ENCODE measurements at regions of chr13 and their contacts with region 1.

Region 1: DNA sequence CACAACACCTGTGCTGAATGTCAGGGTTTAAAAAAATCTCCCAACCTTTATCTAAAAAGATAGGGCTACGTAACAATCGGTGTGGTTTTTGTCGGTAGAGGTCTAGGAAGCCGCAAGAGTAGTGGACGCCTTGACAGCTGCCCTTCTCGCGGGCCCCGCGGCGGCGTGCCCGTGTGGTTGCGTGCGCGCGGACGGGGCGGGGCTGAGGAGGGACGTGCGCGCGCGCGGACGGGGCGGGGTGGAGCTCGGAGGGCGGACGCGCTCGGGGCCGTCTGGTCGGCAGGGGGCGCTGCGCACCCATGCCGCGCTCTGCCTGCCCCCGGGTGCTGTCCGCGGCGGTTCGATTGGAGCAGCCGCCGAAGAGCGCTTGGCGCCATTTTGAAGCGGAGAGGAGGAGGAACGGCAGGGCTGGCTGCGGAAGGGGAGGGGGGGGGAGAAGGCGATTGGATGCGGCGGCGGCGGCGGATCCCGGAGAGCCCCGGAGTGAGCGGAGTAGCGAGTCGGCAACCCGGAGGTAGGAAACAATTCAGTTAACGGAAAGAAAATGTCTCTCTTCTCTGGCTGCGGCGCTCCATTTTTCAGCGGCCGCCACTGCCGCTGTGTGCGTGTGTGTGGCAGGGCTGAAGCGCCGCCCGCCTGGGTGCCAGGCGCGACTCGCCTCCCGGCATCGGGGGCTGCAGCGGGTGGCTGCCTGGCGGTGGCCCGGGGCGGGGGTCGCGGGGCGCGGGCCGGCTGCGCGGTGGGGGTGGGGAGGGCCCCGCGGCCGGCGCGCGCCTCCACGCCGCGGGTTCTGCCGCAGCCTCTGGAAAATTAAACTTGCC is at the start of gene PDS5B:
- DNase-seq: peak; percentile 95 to 99 (median 97)
- ATAC-seq: peak; percentile 97
- H3K4me3 ChIP-seq: peak within 1 kb of the TSS; percentile 89
- H3K4me3 Mint-ChIP-seq: peak within 1 kb of the TSS; percentile 90 to 99 (median 97)
- H3K27ac ChIP-seq: peak within 1 kb of the TSS; percentile 79
- H3K27ac Mint-ChIP-seq: peak within 1 kb of the TSS; percentile 95 to 98 (median 96)
- H3K4me1 ChIP-seq: peaks cover 13 to 15% of the 10 kb centered on the region in 2 donors
- H3K4me1 Mint-ChIP-seq: peaks cover 32 to 49% (median 43%) of the 10 kb centered on the region in 7 donors
- H3K27me3 ChIP-seq: no peaks in the 10 kb centered on the region
- H3K27me3 Mint-ChIP-seq: peaks cover 0 to 20% (median 0%) of the 10 kb centered on the region in 5 donors
- total RNA-seq, gene PDS5B: 43.3 to 68.0 (median 52.1) TPM

Region 2: GRCh38 chr13:32031025-32031814 is 555.1 kb before region 1 on chr13 and contains the start of gene FRY:
- CTCF ChIA-PET with region 1: no interaction called
- POLR2A ChIA-PET with region 1: no interaction called
- intact Hi-C with region 1: loop called in 1 of 2 experiments (anchors 5 kb)
- DNase-seq: peak; percentile 34 to 67 (median 58)
- ATAC-seq: peak; percentile 86
- H3K4me3 ChIP-seq: peak within 1 kb of the TSS; percentile 71
- H3K4me3 Mint-ChIP-seq: peak within 1 kb of the TSS; percentile 82 to 99 (median 90)
- H3K27ac ChIP-seq: peak within 1 kb of the TSS; percentile 72
- H3K27ac Mint-ChIP-seq: peak within 1 kb of the TSS; percentile 77 to 97 (median 83)
- H3K4me1 ChIP-seq: peaks cover 3 to 16% of the 10 kb centered on the region in 2 donors
- H3K4me1 Mint-ChIP-seq: peaks cover 7 to 65% (median 49%) of the 10 kb centered on the region in 7 donors
- H3K27me3 ChIP-seq: no peaks in the 10 kb centered on the region
- H3K27me3 Mint-ChIP-seq: peaks cover 7 to 49% (median 13%) of the 10 kb centered on the region in 5 donors
- total RNA-seq, gene FRY: 9.9 to 39.9 (median 24.0) TPM

Region 3: GRCh38 chr13:32538621-32539246 is 47.6 kb before region 1 on chr13 and contains the start of gene N4BP2L2:
- CTCF ChIA-PET with region 1: interaction called, 6 read pairs
- POLR2A ChIA-PET with region 1: interaction called, 8 read pairs
- intact Hi-C with region 1: loop called (anchors 1 kb)
- DNase-seq: peak; percentile 70 to 94 (median 91)
- ATAC-seq: peak; percentile 98
- H3K4me3 ChIP-seq: peak within 1 kb of the TSS; percentile 78
- H3K4me3 Mint-ChIP-seq: peak within 1 kb of the TSS; percentile 94 to 100 (median 100)
- H3K27ac ChIP-seq: peak within 1 kb of the TSS; percentile 96
- H3K27ac Mint-ChIP-seq: peak within 1 kb of the TSS; percentile 99 to 100 (median 100)
- H3K4me1 ChIP-seq: peaks cover 32 to 39% of the 10 kb centered on the region in 2 donors
- H3K4me1 Mint-ChIP-seq: peaks cover 33 to 56% (median 50%) of the 10 kb centered on the region in 7 donors
- H3K27me3 ChIP-seq: no peaks in the 10 kb centered on the region
- H3K27me3 Mint-ChIP-seq: peaks cover 0 to 11% (median 3%) of the 10 kb centered on the region in 5 donors
- total RNA-seq, gene N4BP2L2: 136 to 358 (median 226) TPM

Region 4: DNA sequence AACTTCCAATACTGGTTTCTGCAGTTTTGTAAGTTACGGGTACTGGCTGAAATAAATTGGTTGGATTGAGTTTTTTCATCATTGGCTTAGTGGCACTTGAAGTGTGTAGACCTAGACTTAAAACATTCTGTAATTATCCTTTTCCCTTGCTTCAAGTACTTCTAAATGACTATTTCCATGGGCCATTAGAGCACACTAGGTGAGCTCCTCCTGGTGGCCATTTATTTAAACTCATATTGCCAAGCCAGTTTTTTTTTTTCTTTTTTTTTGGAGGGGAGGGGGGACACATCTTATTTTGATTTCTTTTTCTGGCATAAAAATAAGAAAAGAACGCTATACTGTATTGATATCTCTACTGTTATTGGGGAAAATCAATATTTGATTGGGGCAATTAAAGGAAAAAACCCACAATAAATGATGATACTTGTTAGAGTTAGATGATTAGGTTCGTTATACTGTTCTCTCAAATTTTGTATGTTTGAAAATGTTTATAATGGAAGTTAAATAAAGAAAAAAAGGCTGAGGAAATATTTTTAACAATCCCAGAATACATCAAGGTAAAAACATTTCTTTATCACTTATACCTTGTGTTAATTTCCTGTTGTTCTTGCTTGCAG is 82.8 kb after region 1 on chr13:
- CTCF ChIA-PET with region 1: interaction called, 14 read pairs
- POLR2A ChIA-PET with region 1: no interaction called
- intact Hi-C with region 1: loop called (anchors 1 kb)
- DNase-seq: peak in 7 of 9 donors; percentile 11 to 57 (median 37)
- ATAC-seq: peak; percentile 72
- H3K4me3 ChIP-seq: no peak overlapping the region
- H3K4me3 Mint-ChIP-seq: no peak overlapping the region
- H3K27ac ChIP-seq: no peak overlapping the region
- H3K27ac Mint-ChIP-seq: peak overlapping the region in 2 of 9 donors; percentile 2 to 14
- H3K4me1 ChIP-seq: no peaks in the 10 kb centered on the region
- H3K4me1 Mint-ChIP-seq: peaks cover 2 to 31% (median 11%) of the 10 kb centered on the region in 7 donors
- H3K27me3 ChIP-seq: no peaks in the 10 kb centered on the region
- H3K27me3 Mint-ChIP-seq: no peaks in the 10 kb centered on the region

Region 5: GRCh38 chr13:32911506-32911905 is 325.2 kb after region 1 on chr13:
- CTCF ChIA-PET with region 1: interaction called, 4 read pairs
- POLR2A ChIA-PET with region 1: no interaction called
- intact Hi-C with region 1: loop called (anchors 1 kb)
- DNase-seq: peak in 5 of 9 donors; percentile 0 to 29 (median 21)
- ATAC-seq: peak; percentile 60
- H3K4me3 ChIP-seq: no peak overlapping the region
- H3K4me3 Mint-ChIP-seq: no peak overlapping the region
- H3K27ac ChIP-seq: no peak overlapping the region
- H3K27ac Mint-ChIP-seq: no peak overlapping the region
- H3K4me1 ChIP-seq: no peaks in the 10 kb centered on the region
- H3K4me1 Mint-ChIP-seq: peaks cover 0 to 25% (median 0%) of the 10 kb centered on the region in 7 donors
- H3K27me3 ChIP-seq: no peaks in the 10 kb centered on the region
- H3K27me3 Mint-ChIP-seq: peaks cover 0 to 10% (median 6%) of the 10 kb centered on the region in 5 donors

Region 6: DNA sequence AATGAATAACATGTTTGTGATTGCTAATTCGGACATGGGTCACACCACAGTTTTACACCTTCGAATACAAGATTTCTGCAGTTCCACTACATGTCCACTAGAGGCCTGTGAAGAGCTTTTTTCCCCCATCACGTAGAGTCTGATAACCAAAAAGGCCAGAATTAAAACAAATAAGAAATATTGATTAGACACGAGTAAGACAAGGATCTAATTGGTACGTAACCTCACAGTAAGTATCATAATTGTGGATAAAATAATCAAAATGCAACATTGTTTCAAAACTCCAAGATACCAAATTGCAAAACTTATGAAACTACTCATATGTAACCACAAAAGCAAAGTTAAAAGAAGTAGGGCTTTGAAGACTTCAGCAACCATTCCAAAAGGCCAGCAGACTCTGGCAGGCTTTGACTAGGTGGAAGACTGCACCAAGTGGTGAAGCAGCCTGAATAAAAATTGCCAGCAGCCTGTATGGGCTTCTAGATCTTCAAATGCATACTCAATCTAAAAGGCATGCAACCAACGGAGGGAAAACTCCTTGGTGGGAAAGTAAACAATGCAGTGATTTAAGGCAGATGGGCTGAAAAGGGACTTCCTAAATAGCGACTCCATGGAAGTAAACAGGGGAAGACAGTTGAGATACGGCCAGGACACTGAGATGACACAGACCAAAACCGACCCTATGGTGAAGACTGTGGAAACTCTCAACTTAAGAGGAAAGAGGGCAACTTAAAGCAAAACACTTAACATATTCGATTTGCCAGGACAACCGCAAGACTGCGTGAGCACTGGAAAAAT is 642.6 kb after region 1 on chr13:
- CTCF ChIA-PET with region 1: no interaction called
- POLR2A ChIA-PET with region 1: no interaction called
- intact Hi-C with region 1: loop called in 1 of 2 experiments (anchors 5 kb)
- DNase-seq: peak in 7 of 9 donors; percentile 4 to 49 (median 37)
- ATAC-seq: peak; percentile 75
- H3K4me3 ChIP-seq: no peak overlapping the region
- H3K4me3 Mint-ChIP-seq: no peak overlapping the region
- H3K27ac ChIP-seq: no peak overlapping the region
- H3K27ac Mint-ChIP-seq: peak overlapping the region in 1 of 9 donors; percentile 73
- H3K4me1 ChIP-seq: peaks cover 0 to 4% of the 10 kb centered on the region in 2 donors
- H3K4me1 Mint-ChIP-seq: peaks cover 0 to 8% (median 6%) of the 10 kb centered on the region in 7 donors
- H3K27me3 ChIP-seq: no peaks in the 10 kb centered on the region
- H3K27me3 Mint-ChIP-seq: peaks cover 0 to 5% (median 4%) of the 10 kb centered on the region in 5 donors